ENCODE measurements at regions of chr18 and their contacts with region 1.

Region 1: GRCh38 chr18:61502472-61502871 is 169.2 kb downstream of the CDH20 start:
- DNase-seq: no peak
- H3K4me3 ChIP-seq: no peak overlapping the region
- H3K27ac ChIP-seq: no peak overlapping the region
- H3K4me1 ChIP-seq: no peaks in the 10 kb centered on the region
- H3K27me3 ChIP-seq: no peaks in the 10 kb centered on the region
- CTCF ChIP-seq: peak in 2 of 3 experiments; percentile 60 to 63

Region 2: GRCh38 chr18:60684843-60685513 is 817.5 kb before region 1 on chr18:
- intact Hi-C with region 1: loop called (anchors 2 kb)
- DNase-seq: no peak
- H3K4me3 ChIP-seq: no peak overlapping the region
- H3K27ac ChIP-seq: no peak overlapping the region
- H3K4me1 ChIP-seq: no peaks in the 10 kb centered on the region
- H3K27me3 ChIP-seq: no peaks in the 10 kb centered on the region
- CTCF ChIP-seq: peak in 2 of 3 experiments; percentile 44 to 61

Region 3: DNA sequence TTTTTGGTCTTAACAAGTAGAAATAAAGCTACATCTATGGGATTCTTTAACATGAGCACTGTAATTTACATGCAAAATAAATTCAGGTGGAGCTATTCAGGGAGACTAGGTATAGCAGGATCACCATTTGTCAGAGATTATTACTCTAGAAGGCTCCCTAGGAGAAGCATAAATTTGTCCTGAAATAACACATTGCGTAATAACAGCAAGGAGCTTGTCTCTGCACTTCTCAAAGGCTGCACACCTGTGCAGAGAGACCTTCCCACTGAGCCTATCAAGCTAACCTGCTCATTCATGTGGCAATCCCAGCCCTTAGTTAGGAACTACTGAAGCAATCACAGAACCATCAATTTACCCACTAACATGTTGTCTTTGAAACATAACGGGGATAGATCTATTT is 692.5 kb before region 1 on chr18:
- intact Hi-C with region 1: loop called (anchors 2 kb)
- DNase-seq: no peak
- H3K4me3 ChIP-seq: no peak overlapping the region
- H3K27ac ChIP-seq: no peak overlapping the region
- H3K4me1 ChIP-seq: no peaks in the 10 kb centered on the region
- H3K27me3 ChIP-seq: no peaks in the 10 kb centered on the region
- CTCF ChIP-seq: no peak